ENCODE measurements at regions of chr1 and their contacts with region 1.

Region 1: DNA sequence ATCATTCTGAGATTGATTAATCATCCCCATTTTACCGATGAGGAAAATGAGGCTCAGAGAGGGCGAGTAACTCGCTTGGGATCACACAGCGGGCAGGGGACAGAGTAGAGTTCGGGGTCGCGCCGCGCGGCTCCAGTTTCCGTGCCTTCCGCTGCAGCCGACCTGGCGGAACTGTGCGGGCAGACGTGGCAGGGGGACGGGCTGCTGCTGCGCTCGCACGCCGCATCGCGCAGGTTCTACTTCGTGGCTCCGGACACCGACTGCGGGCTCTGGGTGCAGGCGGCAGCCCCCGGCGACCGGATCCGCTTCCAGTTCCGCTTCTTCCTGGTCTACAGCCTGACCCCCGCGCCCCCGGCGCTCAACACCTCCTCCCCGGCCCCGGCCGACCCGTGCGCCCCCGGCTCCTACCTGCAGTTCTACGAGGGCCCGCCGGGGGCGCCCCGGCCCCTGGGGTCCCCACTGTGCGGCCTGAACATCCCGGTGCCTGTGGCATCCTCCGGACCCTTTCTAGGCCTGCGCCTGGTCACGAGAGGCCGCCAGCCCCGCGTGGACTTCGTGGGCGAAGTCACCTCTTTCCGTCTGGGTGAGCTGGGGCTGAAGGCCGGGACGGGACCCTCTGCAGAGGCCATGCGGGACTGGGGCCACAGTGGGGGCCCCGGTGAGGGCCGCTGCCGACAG is 2.3 kb downstream of the LDLRAD2 start:
- DNase-seq: peak; percentile 53
- ATAC-seq: peak; percentile 78
- H3K4me3 Mint-ChIP-seq: peak overlapping the region; percentile 36
- H3K27ac Mint-ChIP-seq: no peak overlapping the region
- H3K4me1 Mint-ChIP-seq: peaks cover 20% of the 10 kb centered on the region
- H3K27me3 Mint-ChIP-seq: peaks cover 3% of the 10 kb centered on the region
- CTCF ChIP-seq: peak; percentile 18

Region 2: DNA sequence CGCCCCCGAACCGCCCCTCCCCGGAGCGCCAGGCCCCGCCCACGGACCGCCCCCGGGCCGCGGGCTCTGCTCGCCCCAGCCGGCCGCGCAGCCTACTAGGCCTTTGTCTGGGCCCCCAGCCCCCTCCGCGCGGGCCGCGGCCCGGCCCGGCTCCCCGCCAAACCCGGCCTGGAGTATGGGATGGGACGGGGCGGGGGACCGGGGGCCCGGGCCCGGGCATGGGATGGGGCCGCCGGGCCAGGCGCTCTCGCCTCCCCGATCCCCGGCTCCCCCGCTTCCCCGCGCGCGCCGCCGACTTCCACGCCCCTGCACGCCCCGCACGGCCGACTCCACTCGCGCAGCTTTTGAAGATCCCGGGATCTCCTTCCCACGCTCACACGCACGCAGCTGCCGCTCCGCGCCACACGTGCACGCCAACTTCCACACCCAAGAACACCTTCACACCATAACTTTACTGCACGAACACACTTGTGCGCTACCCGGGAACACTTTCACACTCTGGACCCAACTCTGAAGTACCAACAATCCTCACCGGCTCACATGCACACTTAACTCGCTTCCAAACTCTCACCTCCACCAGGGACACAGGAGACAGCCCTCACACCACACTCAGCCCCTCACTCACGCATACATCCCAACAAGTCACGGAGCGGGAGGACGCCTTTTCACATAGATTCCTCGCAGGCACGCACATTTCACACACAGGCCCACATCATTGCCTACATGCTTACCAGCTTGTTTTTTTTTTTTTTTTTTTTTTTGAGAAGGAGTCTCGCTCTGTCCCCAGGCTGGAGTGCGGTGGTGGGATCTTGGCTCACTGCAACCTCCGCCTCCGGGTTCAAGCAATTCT is 123.2 kb after region 1 on chr1:
- CTCF ChIA-PET with region 1: no interaction called
- POLR2A ChIA-PET with region 1: no interaction called
- intact Hi-C with region 1: loop called (anchors 10 kb)
- DNase-seq: peak; percentile 71
- ATAC-seq: peak; percentile 95
- H3K4me3 Mint-ChIP-seq: peak overlapping the region; percentile 84
- H3K27ac Mint-ChIP-seq: peak overlapping the region; percentile 27
- H3K4me1 Mint-ChIP-seq: peaks cover 7% of the 10 kb centered on the region
- H3K27me3 Mint-ChIP-seq: peaks cover 24% of the 10 kb centered on the region
- CTCF ChIP-seq: no peak